ENCODE measurements at regions of chr1 and their contacts with region 1.

Region 1: GRCh38 chr1:6235296-6235677 is 477 bp downstream of the ICMT start:
- DNase-seq: peak in 3 of 9 experiments; percentile 15 to 38 (median 17)
- ATAC-seq: peak; percentile 16
- H3K4me3 ChIP-seq: peak overlapping the region; percentile 62 to 63
- H3K4me3 Mint-ChIP-seq: peak overlapping the region; percentile 88
- H3K27ac ChIP-seq: peak overlapping the region in 1 of 2 experiments; percentile 21
- H3K27ac Mint-ChIP-seq: peak overlapping the region; percentile 45
- H3K4me1 ChIP-seq: peaks cover 12% of the 10 kb centered on the region
- H3K4me1 Mint-ChIP-seq: peaks cover 16% of the 10 kb centered on the region
- H3K27me3 ChIP-seq: peaks cover 4% of the 10 kb centered on the region in 2 experiments
- H3K27me3 Mint-ChIP-seq: peaks cover 10% of the 10 kb centered on the region
- CTCF ChIP-seq: no peak

Region 2: DNA sequence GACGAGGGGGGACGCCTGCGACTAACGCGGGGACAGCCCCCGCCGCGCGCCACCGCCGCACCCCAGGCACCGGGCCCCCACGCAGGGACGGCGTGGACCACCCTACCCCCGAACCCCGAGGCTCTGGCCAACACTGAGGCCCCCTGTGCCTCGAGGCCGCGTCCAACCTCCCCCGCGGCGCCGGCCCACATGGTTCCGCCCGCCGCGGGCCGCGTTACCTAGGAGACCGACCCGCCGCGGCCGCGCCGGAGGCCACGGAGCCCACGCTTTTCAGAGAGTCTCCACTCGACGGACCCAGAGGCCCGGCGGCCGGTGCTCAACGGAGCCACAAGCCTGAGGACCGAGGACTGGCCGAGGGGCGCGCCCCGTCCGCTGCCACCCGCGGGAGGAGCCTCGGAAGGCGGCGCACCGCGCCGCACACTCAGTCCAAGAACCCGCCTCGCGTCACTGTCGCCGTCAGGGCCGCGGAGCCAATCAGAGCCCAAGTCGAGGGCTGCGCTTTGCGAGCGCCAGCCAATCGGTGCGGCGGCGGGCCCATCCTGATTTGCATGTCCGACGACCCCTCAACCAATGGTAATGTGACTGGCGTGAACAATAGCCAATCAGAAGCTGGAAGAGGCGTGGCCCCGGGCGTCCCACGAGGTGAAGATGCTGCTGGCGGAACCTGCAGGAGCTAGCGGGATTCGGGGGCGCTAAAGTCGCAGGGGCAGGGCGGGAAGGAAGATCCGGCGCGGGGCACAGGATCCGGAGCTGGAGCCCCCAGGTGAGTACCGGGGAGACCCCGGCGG is 243.1 kb before region 1 on chr1 and contains the start of gene NPHP4:
- CTCF ChIA-PET with region 1: no interaction called
- POLR2A ChIA-PET with region 1: no interaction called
- intact Hi-C with region 1: loop called in 1 of 2 experiments (anchors 2 kb)
- DNase-seq: peak; percentile 98 to 100 (median 99)
- ATAC-seq: peak; percentile 86
- H3K4me3 ChIP-seq: peak within 1 kb of the TSS; percentile 64 to 87
- H3K4me3 Mint-ChIP-seq: peak within 1 kb of the TSS; percentile 96
- H3K27ac ChIP-seq: peak within 1 kb of the TSS; percentile 90 to 99
- H3K27ac Mint-ChIP-seq: peak within 1 kb of the TSS; percentile 93
- H3K4me1 ChIP-seq: peaks cover 35% of the 10 kb centered on the region
- H3K4me1 Mint-ChIP-seq: peaks cover 33% of the 10 kb centered on the region
- H3K27me3 ChIP-seq: no peaks in the 10 kb centered on the region
- H3K27me3 Mint-ChIP-seq: no peaks in the 10 kb centered on the region
- CTCF ChIP-seq: no peak
- total RNA-seq, gene NPHP4: 3.1 to 3.7 TPM

Region 3: GRCh38 chr1:6041432-6042062 is 193.7 kb before region 1 on chr1:
- CTCF ChIA-PET with region 1: no interaction called
- POLR2A ChIA-PET with region 1: no interaction called
- intact Hi-C with region 1: loop called in 1 of 2 experiments (anchors 5 kb)
- DNase-seq: peak in 5 of 9 experiments; percentile 21 to 45 (median 36)
- ATAC-seq: peak; percentile 48
- H3K4me3 ChIP-seq: no peak overlapping the region
- H3K4me3 Mint-ChIP-seq: no peak overlapping the region
- H3K27ac ChIP-seq: no peak overlapping the region
- H3K27ac Mint-ChIP-seq: no peak overlapping the region
- H3K4me1 ChIP-seq: peaks cover 16% of the 10 kb centered on the region
- H3K4me1 Mint-ChIP-seq: peaks cover 27% of the 10 kb centered on the region
- H3K27me3 ChIP-seq: no peaks in the 10 kb centered on the region
- H3K27me3 Mint-ChIP-seq: no peaks in the 10 kb centered on the region
- CTCF ChIP-seq: peak; percentile 53